Prostate gland (tissue), 2 donors: ENCODE measurements at regions of chr7 and their contacts with region 1.

Region 1: GRCh38 chr7:55110661-55111361 is 92.0 kb downstream of the EGFR start:
- DNase-seq: no peak
- H3K4me3 ChIP-seq: no peak overlapping the region
- H3K27ac ChIP-seq: peak overlapping the region; percentile 53 to 61
- H3K4me1 ChIP-seq: peaks cover 6% of the 10 kb centered on the region
- H3K27me3 ChIP-seq: no peaks in the 10 kb centered on the region
- CTCF ChIP-seq: no peak
- POLR2A ChIP-seq: no peak

Region 2: GRCh38 chr7:55177589-55178261 is 66.9 kb after region 1 on chr7:
- intact Hi-C with region 1: loop called (anchors 10 kb)
- DNase-seq: peak; percentile 89
- H3K4me3 ChIP-seq: no peak overlapping the region
- H3K27ac ChIP-seq: peak overlapping the region; percentile 85 to 88
- H3K4me1 ChIP-seq: peaks cover 31% of the 10 kb centered on the region
- H3K27me3 ChIP-seq: no peaks in the 10 kb centered on the region
- CTCF ChIP-seq: no peak
- POLR2A ChIP-seq: no peak